ENCODE measurements at regions of chr1 and their contacts with region 1.

Region 1: DNA sequence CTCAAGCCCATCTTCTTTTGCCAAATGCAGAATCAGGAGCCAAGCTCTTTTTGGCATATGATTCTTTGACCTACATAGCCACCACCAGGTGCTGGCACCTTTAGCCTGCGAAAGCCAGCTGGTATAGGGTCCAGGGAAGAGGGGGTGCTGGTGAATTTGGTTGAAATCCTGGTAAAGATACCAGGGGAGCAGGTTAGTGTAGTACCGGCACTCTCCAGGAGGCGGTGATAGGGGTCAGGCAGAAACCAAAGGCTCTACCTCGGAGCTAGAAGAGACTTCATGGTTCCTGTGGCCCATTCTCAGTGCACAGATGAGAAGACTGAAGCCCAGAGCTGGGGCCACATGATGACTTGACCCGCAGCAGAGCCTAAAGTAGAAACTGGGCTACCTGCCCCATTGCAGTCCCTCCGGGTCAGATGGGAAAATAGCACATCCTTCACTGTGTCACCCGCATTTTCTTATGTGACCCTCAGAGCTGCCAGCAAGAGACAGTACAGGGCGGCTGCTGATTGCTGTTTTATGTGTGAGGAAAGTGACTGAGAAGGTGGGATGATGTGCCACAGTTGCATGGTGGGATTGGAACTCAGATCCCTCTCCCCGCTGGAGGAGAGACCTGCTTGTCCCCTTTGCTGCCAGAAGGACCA is 36.0 kb upstream of the IL19 start:
- DNase-seq: peak; percentile 74 to 90
- ATAC-seq: peak; percentile 49 to 63 (median 63)
- H3K4me3 ChIP-seq: no peak overlapping the region
- H3K4me3 Mint-ChIP-seq: peak overlapping the region; percentile 17
- H3K27ac ChIP-seq: no peak overlapping the region
- H3K27ac Mint-ChIP-seq: peak overlapping the region; percentile 66 to 92
- H3K4me1 ChIP-seq: peaks cover 66% of the 10 kb centered on the region
- H3K4me1 Mint-ChIP-seq: peaks cover 63 to 68% of the 10 kb centered on the region in 2 donors
- H3K27me3 ChIP-seq: no peaks in the 10 kb centered on the region
- H3K27me3 Mint-ChIP-seq: no peaks in the 10 kb centered on the region
- CTCF ChIP-seq: peak; percentile 84

Region 2: DNA sequence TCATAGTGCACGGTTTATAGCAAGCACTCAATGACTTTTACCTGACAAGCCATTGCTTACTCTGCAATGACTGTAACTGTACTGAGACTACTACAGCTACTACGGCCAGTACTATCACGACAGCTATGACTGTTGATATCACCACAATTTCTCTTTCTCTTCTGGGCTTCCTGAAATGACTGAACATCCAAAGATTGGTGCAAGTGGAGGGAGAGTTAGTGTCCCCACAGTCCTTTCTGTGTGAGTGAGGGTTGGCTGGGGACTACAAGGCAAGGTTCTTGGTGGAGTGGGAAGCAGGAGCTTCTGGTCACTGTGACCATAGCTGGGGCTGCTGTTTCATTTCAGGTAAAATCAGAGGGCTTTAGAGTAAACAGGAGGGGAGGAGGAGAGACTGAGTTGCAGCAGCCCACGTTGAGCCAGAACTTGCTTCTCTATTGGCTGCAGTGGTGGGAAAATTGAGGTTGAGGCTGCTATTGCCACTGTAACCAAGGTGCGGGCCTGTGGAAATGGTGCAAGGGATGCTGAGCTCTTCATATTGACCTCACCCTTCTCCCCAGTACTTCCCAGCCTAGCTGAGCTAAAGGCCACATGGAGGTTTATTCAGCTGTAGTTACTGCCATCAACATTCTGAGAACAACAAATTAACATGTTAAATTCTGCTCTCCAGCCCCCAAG is 51.7 kb after region 1 on chr1:
- intact Hi-C with region 1: loop called (anchors 5 kb)
- DNase-seq: peak; percentile 34 to 44
- ATAC-seq: peak; percentile 47 to 82 (median 65)
- H3K4me3 ChIP-seq: no peak overlapping the region
- H3K4me3 Mint-ChIP-seq: peak overlapping the region; percentile 36
- H3K27ac ChIP-seq: no peak overlapping the region
- H3K27ac Mint-ChIP-seq: no peak overlapping the region
- H3K4me1 ChIP-seq: peaks cover 44% of the 10 kb centered on the region
- H3K4me1 Mint-ChIP-seq: peaks cover 52 to 62% of the 10 kb centered on the region in 2 donors
- H3K27me3 ChIP-seq: peaks cover 3% of the 10 kb centered on the region
- H3K27me3 Mint-ChIP-seq: peaks cover 36 to 77% of the 10 kb centered on the region in 2 donors
- CTCF ChIP-seq: no peak